Head of caudate nucleus (tissue), 42 donors: ENCODE measurements at regions of chr13 and their contacts with region 1.

Region 1: DNA sequence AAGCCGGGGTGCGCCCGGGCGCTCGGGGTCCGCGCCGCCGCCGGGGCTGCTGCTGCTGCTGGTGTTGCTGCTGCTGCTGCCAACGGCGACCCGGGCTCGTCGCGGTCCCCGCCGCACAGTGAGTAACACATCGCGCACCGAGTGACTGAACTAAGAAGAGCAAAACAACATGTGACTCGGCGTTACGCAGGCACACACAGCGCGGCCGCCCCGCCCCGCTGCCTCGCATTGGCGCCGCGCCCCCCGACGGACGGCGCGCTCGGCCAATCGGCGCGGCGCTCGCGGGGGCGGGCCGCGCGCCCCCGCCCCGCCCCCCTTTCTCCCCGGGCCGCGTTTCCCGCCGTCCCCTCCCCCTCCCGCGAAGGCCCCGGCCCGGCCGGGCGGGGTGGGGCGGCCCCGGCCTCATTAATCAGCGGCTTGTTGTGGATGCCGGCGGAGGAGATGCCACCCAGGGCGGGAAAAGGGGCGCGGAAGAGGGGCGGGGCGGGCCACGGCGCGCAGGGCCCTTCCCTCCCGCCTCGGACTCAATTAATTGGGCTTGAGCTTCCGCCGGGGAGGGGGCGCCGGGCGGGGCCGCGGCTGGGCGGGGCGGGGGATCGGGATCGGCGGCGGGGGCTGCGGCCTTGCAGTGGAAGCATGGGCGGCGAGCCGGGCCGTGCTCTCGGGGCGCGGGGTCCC is at the start of gene IRS2:
- DNase-seq: peak; percentile 94 to 99 (median 98)

Region 2: GRCh38 chr13:108361769-108362168 is 1424.8 kb before region 1 on chr13:
- intact Hi-C with region 1: no loop called
- DNase-seq: no peak

Region 3: GRCh38 chr13:108961542-108962125 is 825.0 kb before region 1 on chr13:
- intact Hi-C with region 1: loop called (anchors 5 kb)
- DNase-seq: peak in 4 of 42 donors; percentile 12 to 71 (median 26)

Region 4: DNA sequence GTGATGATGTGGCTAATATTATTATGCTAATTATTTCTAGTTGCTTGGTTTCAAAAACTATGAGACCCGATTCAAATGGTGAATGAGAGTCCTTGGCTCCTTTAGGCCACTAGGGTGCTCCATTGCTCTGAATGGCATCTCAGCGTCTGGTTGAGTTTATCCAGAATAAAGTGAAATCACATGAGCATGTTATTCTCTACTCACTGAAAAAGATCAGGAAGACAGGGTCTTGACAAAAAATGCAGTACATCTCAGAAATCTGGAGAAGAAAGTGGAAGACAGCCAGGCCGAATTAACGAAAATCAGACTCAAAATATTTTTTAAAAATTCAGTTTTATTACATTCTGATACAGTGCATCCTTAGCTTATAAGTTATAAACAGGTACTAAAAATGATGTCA is 641.0 kb before region 1 on chr13:
- intact Hi-C with region 1: loop called (anchors 10 kb)
- DNase-seq: peak in 24 of 42 donors; percentile 24 to 79 (median 48)

Region 5: GRCh38 chr13:109910194-109910593 is 123.6 kb after region 1 on chr13:
- intact Hi-C with region 1: no loop called
- DNase-seq: no peak

Region 6: DNA sequence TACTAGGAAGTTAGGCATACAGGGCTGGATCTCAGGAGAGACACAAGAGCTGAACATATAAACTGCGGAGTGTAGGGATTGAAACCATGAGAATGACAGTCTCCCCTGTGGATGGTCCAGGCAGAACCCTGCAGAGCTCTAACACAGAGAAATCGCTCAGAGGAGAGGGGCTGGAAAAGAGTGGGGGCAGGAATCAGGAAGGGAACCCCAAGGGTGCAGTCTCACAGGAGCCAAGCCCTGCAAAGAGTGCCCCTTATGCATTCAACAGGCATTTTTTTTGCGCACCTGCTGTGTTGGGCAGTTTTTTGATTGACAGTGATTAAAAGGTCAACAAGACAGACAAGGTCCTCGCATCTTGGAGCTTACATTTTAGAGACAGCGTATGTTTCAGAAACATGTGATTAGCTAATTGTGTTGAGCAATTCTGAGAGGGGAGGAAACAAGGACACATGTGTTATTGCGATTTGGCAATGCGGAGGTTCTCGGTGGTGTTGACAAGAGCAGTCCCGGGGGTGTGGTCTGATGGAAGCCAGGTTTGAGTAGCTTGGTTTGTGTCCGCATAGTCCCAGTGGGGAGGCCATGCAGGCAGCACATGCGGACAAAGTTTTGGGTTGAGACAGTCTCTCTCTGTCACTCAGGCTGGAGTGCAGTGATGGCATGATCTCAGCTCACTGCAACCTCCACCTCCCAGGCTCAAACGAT is 182.4 kb after region 1 on chr13:
- intact Hi-C with region 1: no loop called
- DNase-seq: no peak

Region 7: DNA sequence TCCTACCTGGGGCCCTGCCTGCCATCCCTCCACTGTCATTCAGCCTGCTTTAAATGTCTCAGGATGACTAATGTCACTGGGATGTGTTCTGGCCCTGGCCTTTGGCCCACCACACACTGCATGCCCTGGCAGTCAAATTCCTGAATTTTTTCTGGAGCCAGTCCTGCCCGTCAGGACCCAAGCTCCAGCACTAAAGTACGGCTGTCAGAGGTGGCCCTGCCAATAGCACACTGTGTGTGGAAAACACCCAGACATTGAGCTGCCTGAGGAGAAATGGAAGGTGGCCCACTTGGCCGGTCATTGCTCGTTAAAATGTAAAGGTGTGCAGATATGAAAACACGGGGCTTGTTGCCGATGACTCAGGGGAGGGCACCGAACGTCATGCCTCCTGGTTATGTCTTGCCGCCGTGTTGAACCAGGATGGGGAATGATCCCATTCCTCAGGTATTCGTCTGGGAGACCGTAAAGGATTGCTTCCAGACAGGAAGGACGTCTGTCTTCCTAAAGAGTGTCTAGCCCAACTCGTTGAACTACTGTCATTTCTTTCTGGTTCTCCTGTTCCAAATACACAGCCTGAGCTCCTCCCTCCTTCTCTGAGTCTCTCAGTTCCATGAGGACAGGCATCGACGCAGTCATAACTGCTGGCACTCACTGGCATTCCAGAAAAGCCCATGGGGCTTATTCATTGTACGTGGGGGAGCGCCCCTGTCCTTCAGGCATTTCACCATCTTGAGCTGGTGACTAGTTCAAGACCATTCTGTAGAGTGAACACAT is 561.1 kb after region 1 on chr13:
- intact Hi-C with region 1: no loop called
- DNase-seq: no peak